ENCODE measurements at regions of chr20 and their contacts with region 1.

Region 1: DNA sequence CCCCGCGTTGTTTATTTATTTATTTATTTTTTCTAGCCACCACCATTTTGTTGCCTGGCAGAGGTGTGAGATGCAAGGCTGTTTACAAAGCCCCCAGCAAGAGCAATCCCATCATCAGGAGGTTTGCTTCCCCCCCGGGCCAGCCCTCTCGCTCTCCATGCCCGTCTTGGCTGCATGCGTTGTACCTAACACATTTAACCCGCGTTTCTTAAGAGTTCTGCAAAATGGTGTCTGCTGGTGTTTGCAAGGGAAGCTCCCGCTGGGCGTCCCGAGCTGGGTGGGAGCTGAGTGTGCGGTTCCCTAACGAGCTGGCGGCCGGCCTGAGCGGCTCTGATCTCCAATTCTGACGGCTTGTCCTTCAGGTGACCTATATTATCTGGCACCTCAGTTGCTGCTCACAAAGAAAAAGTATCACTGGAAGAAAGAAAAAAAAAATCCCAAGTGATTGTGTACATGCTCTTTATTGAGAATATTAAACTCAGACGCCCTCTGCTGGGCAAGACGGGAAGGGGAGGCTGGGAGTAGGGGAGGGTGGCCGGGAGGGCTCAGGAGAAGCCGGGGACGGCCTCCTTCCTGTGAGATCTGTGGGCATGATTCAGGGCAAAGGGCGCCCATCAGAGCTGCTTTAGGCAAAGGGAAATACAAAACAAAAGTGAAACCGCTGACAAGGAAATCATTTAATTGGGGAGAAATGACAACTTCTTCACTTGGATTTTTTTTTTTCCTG is 154.8 kb downstream of the BCAS1 start:
- DNase-seq: peak; percentile 99
- ATAC-seq: peak; percentile 94
- H3K4me3 Mint-ChIP-seq: peak overlapping the region; percentile 80
- H3K27ac Mint-ChIP-seq: peak overlapping the region; percentile 94
- H3K4me1 Mint-ChIP-seq: peaks cover 46% of the 10 kb centered on the region
- H3K27me3 Mint-ChIP-seq: no peaks in the 10 kb centered on the region
- CTCF ChIP-seq: peak; percentile 72

Region 2: GRCh38 chr20:53578492-53579222 is 337.0 kb before region 1 on chr20:
- CTCF ChIA-PET with region 1: interaction called, 34 read pairs
- POLR2A ChIA-PET with region 1: no interaction called
- intact Hi-C with region 1: loop called (anchors 1 kb)
- DNase-seq: peak; percentile 69
- ATAC-seq: peak; percentile 41
- H3K4me3 Mint-ChIP-seq: peak overlapping the region; percentile 90
- H3K27ac Mint-ChIP-seq: peak overlapping the region; percentile 94
- H3K4me1 Mint-ChIP-seq: peaks cover 77% of the 10 kb centered on the region
- H3K27me3 Mint-ChIP-seq: no peaks in the 10 kb centered on the region
- CTCF ChIP-seq: peak; percentile 88

Region 3: GRCh38 chr20:53839423-53840176 is 76.0 kb before region 1 on chr20:
- CTCF ChIA-PET with region 1: interaction called, 9 read pairs
- POLR2A ChIA-PET with region 1: no interaction called
- intact Hi-C with region 1: loop called (anchors 5 kb)
- DNase-seq: peak; percentile 85
- ATAC-seq: peak; percentile 38
- H3K4me3 Mint-ChIP-seq: peak overlapping the region; percentile 33
- H3K27ac Mint-ChIP-seq: peak overlapping the region; percentile 92
- H3K4me1 Mint-ChIP-seq: peaks cover 73% of the 10 kb centered on the region
- H3K27me3 Mint-ChIP-seq: no peaks in the 10 kb centered on the region
- CTCF ChIP-seq: no peak

Region 4: DNA sequence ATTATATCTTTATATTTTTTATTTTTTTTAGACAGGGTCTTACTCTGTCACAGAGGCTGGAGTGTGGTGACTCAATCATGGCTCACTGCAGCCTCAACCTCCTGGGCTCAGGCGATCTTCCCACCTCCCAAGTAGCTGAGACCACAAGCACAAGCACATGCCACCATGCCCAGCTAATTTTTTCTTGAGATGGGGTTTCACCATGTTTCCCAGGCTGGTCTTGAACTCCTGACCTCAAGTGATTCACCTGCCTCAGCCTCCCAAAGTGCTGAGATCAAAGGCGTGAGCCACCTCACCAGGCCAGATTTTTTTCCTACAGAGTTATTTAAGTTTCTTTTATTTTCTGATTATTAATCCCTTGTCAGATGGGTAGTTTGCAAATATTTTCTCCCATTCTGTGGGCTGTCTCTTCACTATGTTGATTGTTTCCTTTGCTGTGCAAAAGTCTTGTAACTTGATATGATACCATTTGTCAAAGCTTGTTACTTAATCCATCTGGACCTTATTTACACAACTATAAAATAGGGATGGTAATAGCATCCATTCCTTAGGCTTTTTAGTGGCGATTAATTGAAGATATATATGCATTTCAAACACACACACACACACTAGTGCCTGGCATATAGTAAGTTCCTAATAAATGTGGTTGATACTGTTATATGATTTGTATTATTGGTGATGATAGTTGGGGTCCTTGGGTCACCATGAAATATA is 32.4 kb before region 1 on chr20:
- CTCF ChIA-PET with region 1: interaction called, 17 read pairs
- POLR2A ChIA-PET with region 1: interaction called, 11 read pairs
- intact Hi-C with region 1: no loop called
- DNase-seq: peak; percentile 66
- ATAC-seq: no peak
- H3K4me3 Mint-ChIP-seq: peak overlapping the region; percentile 71
- H3K27ac Mint-ChIP-seq: peak overlapping the region; percentile 76
- H3K4me1 Mint-ChIP-seq: peaks cover 77% of the 10 kb centered on the region
- H3K27me3 Mint-ChIP-seq: no peaks in the 10 kb centered on the region
- CTCF ChIP-seq: no peak

Region 5: GRCh38 chr20:53934421-53935343 is 19.1 kb after region 1 on chr20:
- CTCF ChIA-PET with region 1: interaction called, 24 read pairs
- POLR2A ChIA-PET with region 1: interaction called, 3 read pairs
- intact Hi-C with region 1: no loop called
- DNase-seq: peak; percentile 63
- ATAC-seq: peak; percentile 85
- H3K4me3 Mint-ChIP-seq: peak overlapping the region; percentile 26
- H3K27ac Mint-ChIP-seq: peak overlapping the region; percentile 86
- H3K4me1 Mint-ChIP-seq: peaks cover 60% of the 10 kb centered on the region
- H3K27me3 Mint-ChIP-seq: no peaks in the 10 kb centered on the region
- CTCF ChIP-seq: no peak

Region 6: DNA sequence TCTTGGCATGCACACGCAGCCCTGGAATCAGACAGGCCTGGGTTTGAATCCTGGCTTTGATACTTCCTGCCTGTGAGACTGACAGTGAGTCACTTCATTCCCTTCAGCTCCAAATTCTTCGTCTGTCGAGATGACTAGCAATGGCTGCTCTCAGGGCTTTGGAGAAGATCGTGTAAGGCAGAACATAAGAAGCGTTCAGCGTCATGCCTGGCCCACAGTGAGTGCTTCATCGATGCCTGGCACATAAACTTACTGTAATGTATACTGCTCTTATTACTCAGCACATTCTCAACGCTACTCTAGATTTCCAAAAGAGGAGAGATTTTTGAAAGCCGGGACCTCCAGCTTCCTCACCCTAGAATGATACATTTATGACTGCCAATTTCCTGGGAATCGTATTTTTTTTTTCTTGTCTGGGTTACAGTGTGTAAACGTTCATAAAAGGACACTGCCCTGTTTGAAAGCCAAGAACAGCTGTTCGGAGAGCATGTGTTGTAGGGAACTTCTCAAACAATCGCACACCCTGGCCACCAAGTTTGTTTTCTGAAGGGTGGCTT is 171.0 kb after region 1 on chr20:
- CTCF ChIA-PET with region 1: no interaction called
- POLR2A ChIA-PET with region 1: no interaction called
- intact Hi-C with region 1: no loop called
- DNase-seq: no peak
- ATAC-seq: no peak
- H3K4me3 Mint-ChIP-seq: no peak overlapping the region
- H3K27ac Mint-ChIP-seq: no peak overlapping the region
- H3K4me1 Mint-ChIP-seq: no peaks in the 10 kb centered on the region
- H3K27me3 Mint-ChIP-seq: no peaks in the 10 kb centered on the region
- CTCF ChIP-seq: no peak

Measured in activated CD8-positive, alpha-beta T cell treated with anti-CD3 and anti-CD28 coated beads for 36 hours (primary cell).